A549 (cell line): ENCODE measurements at regions of chr14 and their contacts with region 1.

Region 1: GRCh38 chr14:61280526-61281185 is 482 bp downstream of the TMEM30B start:
- DNase-seq: peak; percentile 68 to 84
- ATAC-seq: peak; percentile 91 to 95
- H3K4me3 ChIP-seq: peak overlapping the region; percentile 53
- H3K27ac ChIP-seq: peak overlapping the region; percentile 75 to 86
- H3K4me1 ChIP-seq: peaks cover 11% of the 10 kb centered on the region
- CTCF ChIP-seq: peak; percentile 71
- EP300 ChIP-seq: no peak
- POLR2A ChIP-seq: peak; percentile 55
- RAD21 ChIP-seq: peak in 1 of 2 experiments; percentile 35; a peak in 3 of 5 replicates

Region 2: GRCh38 chr14:61269321-61270083 is 11.2 kb before region 1 on chr14:
- CTCF ChIA-PET with region 1: interaction called, 97 read pairs
- POLR2A ChIA-PET with region 1: no interaction called
- DNase-seq: peak; percentile 73 to 77
- ATAC-seq: peak; percentile 90 to 93
- H3K4me3 ChIP-seq: peak overlapping the region; percentile 37
- H3K27ac ChIP-seq: peak overlapping the region; percentile 36 to 75; a peak in 4 of 6 replicates
- H3K4me1 ChIP-seq: no peaks in the 10 kb centered on the region
- CTCF ChIP-seq: peak; percentile 86
- EP300 ChIP-seq: no peak
- POLR2A ChIP-seq: no peak
- RAD21 ChIP-seq: peak; percentile 78 to 82